Prostate gland (tissue), 2 donors: ENCODE measurements at regions of chrX and their contacts with region 1.

Region 1: DNA sequence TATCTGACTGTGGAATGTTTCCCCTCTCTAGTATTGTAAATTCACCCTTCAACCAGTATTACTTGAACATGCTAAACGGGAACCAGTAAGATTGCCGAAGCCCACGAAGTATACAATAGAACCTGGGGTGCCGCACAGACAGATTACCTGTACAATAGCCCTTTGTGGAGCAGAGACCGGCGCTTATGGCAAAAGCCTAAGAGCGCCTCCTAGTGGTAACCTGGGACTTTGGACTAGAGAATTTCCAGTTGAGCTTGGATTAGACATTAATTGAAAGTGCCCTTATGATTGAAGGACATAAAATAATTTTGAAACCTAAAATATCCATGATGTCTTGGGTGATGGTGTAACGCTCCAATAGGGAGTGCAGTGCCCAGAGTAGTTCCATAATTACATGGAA is 14.1 kb downstream of the ZNF157 start:
- DNase-seq: peak; percentile 64
- H3K4me3 ChIP-seq: no peak overlapping the region
- H3K27ac ChIP-seq: no peak overlapping the region
- H3K4me1 ChIP-seq: no peaks in the 10 kb centered on the region
- H3K27me3 ChIP-seq: no peaks in the 10 kb centered on the region
- CTCF ChIP-seq: peak; percentile 30 to 65 (median 60)
- POLR2A ChIP-seq: no peak

Region 2: DNA sequence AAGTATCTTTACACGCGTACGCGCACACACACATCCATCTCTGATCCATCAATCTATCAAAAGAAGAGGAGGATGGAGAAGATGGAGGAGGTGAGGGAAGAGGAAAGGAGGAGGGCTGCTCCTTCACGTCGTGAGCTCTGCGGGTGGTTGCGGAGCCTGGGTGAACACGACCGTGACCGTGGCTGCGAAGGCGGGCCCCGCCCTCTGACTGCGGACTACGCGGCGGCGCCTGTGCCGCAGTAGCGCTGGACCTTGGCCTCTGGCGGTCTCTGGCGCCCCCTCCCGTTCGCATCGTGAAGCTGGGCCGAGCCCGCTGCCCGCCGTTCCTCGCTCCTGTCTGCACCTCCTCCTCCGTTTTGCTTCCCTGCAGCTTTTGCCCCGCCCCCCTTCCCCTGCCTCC is 138.8 kb after region 1 on chrX:
- intact Hi-C with region 1: loop called (anchors 5 kb)
- DNase-seq: peak; percentile 69
- H3K4me3 ChIP-seq: peak overlapping the region; percentile 39 to 42
- H3K27ac ChIP-seq: no peak overlapping the region
- H3K4me1 ChIP-seq: no peaks in the 10 kb centered on the region
- H3K27me3 ChIP-seq: no peaks in the 10 kb centered on the region
- CTCF ChIP-seq: peak; percentile 62 to 85 (median 80)
- POLR2A ChIP-seq: no peak